ENCODE measurements at regions of chr1 and their contacts with region 1.

Region 1: DNA sequence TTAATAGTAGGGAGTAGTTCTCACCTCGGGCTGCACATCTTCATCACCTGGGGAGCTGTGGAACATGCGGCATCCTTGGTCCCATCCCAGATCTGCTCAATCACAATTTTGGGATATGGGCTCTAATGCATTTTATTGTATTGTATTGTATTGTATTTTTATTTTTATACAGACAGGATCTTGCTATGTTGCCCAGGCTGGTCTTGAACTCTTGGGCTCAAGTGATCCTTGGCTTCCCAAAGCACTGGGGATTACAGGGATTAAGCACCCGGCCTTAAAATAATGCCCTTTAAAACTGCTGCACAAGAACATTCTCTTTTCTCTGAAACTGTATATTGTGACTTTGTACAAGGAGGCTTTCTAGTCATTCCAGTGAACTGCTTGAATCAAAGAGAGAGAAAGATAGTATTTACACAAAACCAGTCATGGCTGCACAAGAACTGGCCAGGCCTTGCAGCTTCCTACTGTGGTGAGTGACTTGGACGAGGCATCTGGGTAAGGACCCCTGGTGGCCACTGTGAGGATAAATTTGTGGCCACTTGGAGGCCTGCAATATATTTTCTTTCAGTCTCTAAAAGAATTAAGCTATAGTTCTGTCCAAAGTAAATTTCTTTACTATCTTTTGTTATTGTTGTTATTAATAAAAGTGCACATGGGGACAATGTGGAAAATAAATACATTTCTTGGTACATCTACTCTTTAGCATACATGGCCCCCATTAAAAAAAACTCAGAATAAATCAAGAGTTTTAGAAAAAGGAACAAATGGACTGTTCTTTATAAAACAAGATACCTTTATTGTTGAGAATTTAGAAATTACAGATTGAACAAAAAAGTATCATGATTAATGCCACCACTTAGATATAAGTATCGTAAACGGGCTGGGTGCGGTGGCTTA is 48.0 kb downstream of the TBCE start:
- DNase-seq: peak; percentile 74
- H3K4me3 Mint-ChIP-seq: no peak overlapping the region
- H3K27ac Mint-ChIP-seq: no peak overlapping the region
- H3K4me1 Mint-ChIP-seq: peaks cover 2% of the 10 kb centered on the region
- H3K27me3 Mint-ChIP-seq: no peaks in the 10 kb centered on the region

Region 2: DNA sequence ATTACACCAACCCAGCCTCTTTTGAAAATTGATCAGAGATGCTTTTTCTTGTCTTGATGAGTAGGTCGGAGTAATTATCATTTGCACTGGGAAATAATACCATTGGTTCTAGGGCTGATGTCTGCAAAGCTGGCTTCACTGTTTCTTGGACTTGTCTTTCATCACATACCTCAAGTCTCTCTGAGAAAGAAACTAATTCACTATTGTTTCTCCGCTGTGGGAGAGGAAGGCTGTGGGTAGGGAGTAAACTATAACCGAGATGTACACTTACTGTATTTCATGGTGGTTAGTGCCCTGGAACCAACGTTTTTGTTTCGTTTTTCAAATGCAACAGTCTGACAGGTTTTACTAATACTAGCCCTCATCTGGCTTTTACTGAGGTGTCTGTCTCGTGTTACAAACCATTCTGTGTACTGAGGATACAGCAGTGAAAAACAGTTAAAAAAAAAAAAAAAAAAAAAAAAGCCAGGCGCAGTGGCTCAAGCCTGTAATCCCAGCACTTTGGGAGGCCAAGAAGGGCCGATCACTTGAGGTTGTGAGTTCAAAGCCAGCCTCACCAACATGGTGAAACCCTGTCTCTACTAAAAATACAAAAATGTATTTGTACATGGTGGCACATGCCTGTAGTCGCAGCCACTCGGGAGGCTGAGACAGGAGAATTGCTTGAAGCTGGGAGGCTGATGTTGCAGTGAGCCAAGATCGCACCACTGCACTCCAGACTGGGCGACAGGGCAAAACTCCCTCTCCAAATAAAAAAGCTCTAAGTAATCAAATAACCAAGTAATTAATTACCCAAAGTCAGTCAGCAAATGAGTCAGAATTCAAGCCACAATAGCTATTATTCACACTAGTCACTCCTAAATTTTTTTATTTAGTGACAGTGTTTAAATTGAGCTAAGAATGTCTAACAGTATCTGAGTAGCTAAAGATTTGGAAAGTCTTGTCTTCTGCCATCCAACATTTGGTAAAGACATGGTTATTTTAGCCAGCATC is 309.9 kb before region 1 on chr1:
- CTCF ChIA-PET with region 1: interaction called, 52 read pairs
- POLR2A ChIA-PET with region 1: interaction called, 5 read pairs
- intact Hi-C with region 1: loop called (anchors 1 kb)
- DNase-seq: peak; percentile 40
- H3K4me3 Mint-ChIP-seq: peak overlapping the region; percentile 67
- H3K27ac Mint-ChIP-seq: peak overlapping the region; percentile 68
- H3K4me1 Mint-ChIP-seq: peaks cover 39% of the 10 kb centered on the region
- H3K27me3 Mint-ChIP-seq: no peaks in the 10 kb centered on the region

Region 3: DNA sequence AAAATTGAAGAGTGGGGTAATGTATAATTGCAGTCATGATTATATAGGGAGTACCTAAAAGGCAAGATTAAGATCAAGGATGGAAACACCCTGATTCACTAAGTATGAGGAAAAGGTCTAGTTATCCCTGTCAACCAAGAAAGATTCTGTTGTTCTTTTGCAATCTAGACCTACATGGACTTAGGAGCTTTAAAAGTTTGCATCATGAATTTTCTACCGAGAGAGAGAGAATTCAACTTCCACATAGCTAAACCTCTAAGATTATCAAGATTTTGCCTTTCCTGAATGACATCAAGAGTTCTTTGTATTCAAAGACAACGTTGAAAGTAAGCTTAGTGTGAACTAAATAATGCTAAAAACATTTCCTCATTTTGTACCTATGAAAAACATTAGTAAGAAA is 175.4 kb before region 1 on chr1:
- CTCF ChIA-PET with region 1: interaction called, 19 read pairs
- POLR2A ChIA-PET with region 1: interaction called, 3 read pairs
- intact Hi-C with region 1: no loop called
- DNase-seq: no peak
- H3K4me3 Mint-ChIP-seq: no peak overlapping the region
- H3K27ac Mint-ChIP-seq: no peak overlapping the region
- H3K4me1 Mint-ChIP-seq: peaks cover 24% of the 10 kb centered on the region
- H3K27me3 Mint-ChIP-seq: no peaks in the 10 kb centered on the region

Region 4: DNA sequence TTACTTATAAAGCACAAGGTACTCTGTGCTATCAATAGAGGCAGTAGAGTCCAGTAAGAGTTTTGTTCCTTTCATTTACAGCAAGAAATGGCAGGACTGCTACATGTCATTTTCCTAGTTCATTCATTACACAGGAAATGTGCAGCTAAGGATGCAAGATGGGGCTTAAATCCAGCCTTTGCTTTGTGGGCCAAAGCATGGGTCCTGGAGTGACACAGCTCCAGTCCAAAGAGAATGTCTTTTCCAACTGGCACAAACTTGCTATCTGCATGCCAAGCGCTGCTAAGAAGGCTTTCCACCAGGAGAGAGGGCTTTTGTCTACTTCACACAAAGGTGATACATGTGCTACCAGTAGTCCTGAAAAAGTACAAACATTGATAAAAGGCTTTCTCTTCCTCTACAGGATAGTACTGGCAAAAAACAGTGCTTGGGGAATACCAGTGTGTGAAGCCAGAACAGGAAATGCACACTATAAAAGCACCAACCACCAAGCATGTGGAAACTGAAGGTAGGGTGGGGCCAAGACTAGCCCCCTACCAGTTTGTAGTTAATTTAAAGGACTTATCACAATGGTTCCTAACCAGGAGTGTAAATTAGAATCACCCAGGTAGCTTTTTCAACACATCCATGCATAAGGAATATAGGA is 156.0 kb before region 1 on chr1:
- CTCF ChIA-PET with region 1: interaction called, 55 read pairs
- POLR2A ChIA-PET with region 1: no interaction called
- intact Hi-C with region 1: no loop called
- DNase-seq: no peak
- H3K4me3 Mint-ChIP-seq: no peak overlapping the region
- H3K27ac Mint-ChIP-seq: peak overlapping the region; percentile 55
- H3K4me1 Mint-ChIP-seq: peaks cover 52% of the 10 kb centered on the region
- H3K27me3 Mint-ChIP-seq: no peaks in the 10 kb centered on the region

Region 5: DNA sequence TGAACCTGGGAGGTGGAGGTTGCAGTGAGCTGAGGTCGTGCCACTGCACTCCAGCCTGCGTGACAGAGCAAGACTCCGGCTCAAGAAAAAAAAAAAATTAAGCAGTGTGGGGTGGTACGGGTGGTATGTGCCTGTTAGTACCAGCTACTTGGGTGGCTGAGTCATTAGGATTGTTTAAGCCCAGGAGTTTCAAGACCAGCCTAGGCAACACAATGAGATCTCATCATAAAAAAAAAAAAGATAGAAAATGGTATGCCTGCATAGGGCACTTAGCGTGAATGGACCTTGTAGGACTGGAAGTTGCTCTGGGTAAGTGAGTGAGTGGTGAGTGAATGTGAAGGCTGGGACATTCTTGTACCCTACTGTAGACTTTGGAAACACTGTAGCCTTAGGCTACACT is 11.1 kb before region 1 on chr1:
- CTCF ChIA-PET with region 1: interaction called, 24 read pairs
- POLR2A ChIA-PET with region 1: no interaction called
- intact Hi-C with region 1: no loop called
- DNase-seq: no peak
- H3K4me3 Mint-ChIP-seq: no peak overlapping the region
- H3K27ac Mint-ChIP-seq: no peak overlapping the region
- H3K4me1 Mint-ChIP-seq: no peaks in the 10 kb centered on the region
- H3K27me3 Mint-ChIP-seq: no peaks in the 10 kb centered on the region

Region 6: DNA sequence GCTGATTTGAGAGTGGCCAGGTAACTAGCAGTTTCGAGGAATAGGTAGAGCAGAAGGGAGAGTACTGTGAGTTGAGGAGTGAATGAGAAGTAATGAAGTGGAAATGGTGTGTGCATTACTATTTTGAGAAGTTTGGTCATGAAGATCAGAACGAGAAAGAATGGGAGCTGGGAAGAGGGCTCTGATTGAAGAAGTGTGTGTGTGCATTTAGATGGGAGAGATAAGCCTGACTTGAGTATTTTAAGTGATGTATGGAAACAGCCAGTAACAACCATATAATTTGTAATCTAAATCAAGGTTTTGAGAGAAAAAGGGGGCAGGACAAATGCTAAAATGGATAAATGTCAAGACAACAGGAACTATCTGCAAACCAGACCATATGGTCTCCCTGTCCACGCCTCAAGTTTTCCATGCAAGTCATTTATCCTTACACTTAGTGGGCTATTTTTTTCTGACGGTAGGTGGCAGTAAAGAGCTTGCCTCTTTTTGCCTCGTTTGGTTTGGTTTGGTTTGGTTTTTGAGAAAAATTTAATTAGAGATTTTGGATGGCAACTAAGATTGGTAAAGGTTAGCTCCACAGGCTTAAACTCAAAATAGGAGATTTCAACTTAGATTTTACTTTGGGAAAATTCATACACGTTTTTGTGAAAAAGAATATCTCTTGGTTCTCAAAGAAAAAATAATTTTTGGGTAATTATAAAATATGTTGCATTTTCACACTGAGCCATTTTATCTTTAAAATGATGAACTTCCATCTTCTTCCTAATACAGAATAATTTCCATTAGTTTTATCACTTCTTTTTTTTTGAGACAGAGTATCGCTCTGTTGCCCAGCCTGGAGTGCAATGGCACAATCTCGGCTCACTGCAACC is 98.5 kb after region 1 on chr1:
- CTCF ChIA-PET with region 1: no interaction called
- POLR2A ChIA-PET with region 1: no interaction called
- intact Hi-C with region 1: no loop called
- DNase-seq: peak; percentile 24
- H3K4me3 Mint-ChIP-seq: no peak overlapping the region
- H3K27ac Mint-ChIP-seq: no peak overlapping the region
- H3K4me1 Mint-ChIP-seq: no peaks in the 10 kb centered on the region
- H3K27me3 Mint-ChIP-seq: peaks cover 5% of the 10 kb centered on the region